ENCODE measurements at regions of chr16 and their contacts with region 1.

Region 1: DNA sequence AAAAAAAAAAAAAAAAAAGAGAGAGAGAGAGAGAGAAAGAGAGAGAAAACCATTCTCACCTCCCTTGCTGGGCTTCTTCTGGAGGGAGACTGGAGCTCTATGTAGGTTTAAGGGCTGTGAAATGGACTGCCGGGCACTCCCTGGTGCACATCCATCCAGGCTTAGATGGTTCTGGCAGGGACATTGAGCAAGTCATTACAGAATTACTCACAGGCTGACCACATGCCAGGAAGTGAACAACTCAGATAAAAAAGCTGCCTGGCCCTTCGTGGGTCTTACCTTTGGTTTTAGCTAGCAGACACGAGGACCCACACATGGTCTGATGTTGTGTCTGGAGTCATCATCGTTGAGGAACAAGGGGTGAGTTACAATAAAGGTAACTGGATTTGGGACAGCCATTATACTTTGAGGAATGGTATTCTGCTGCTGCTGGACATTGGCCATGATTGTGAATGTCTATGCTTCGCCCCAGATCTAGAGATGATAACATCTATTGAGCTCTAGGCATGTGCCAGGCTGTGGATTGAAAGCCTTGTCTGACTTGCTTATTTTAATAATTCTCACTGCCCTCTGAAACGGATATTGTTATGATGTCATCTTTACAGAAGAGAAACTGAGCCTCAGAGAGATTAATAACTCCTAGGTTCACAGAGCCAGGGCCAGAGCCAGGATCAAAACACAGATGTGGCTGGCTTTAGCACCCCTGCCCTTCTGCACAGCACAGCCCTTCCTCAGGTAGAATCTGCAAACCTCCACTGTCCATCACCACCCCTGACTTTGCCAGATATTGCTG is 847.6 kb upstream of the EEF2KMT start:
- DNase-seq: no peak

Region 2: GRCh38 chr16:5965321-5965720 is 20.2 kb after region 1 on chr16:
- intact Hi-C with region 1: no loop called
- DNase-seq: no peak

Region 3: GRCh38 chr16:5993356-5993755 is 48.2 kb after region 1 on chr16:
- intact Hi-C with region 1: loop called (anchors 10 kb)
- DNase-seq: no peak